T-cell (primary cell): ENCODE measurements at regions of chr3 and their contacts with region 1.

Region 1: GRCh38 chr3:46866720-46867549 is 3.7 kb upstream of the MYL3 start:
- DNase-seq: peak; percentile 22 to 87 (median 72)
- ATAC-seq: peak; percentile 64 to 75 (median 69)
- H3K4me3 ChIP-seq: no peak overlapping the region
- H3K4me3 Mint-ChIP-seq: no peak overlapping the region
- H3K27ac ChIP-seq: no peak overlapping the region
- H3K27ac Mint-ChIP-seq: no peak overlapping the region
- H3K4me1 ChIP-seq: no peaks in the 10 kb centered on the region
- H3K4me1 Mint-ChIP-seq: no peaks in the 10 kb centered on the region
- H3K27me3 ChIP-seq: peaks cover 0 to 34% of the 10 kb centered on the region in 2 experiments
- H3K27me3 Mint-ChIP-seq: peaks cover 0 to 10% of the 10 kb centered on the region in 2 donors

Region 2: GRCh38 chr3:47324278-47324865 is 457.4 kb after region 1 on chr3:
- CTCF ChIA-PET with region 1: interaction called in 1 of 2 experiments, 13 read pairs
- POLR2A ChIA-PET with region 1: no interaction called
- DNase-seq: peak in 32 of 35 experiments; percentile 5 to 72 (median 30)
- ATAC-seq: peak; percentile 48 to 67 (median 64)
- H3K4me3 ChIP-seq: no peak overlapping the region
- H3K4me3 Mint-ChIP-seq: no peak overlapping the region
- H3K27ac ChIP-seq: no peak overlapping the region
- H3K27ac Mint-ChIP-seq: no peak overlapping the region
- H3K4me1 ChIP-seq: no peaks in the 10 kb centered on the region
- H3K4me1 Mint-ChIP-seq: peaks cover 2 to 8% (median 2%) of the 10 kb centered on the region in 3 donors
- H3K27me3 ChIP-seq: no peaks in the 10 kb centered on the region
- H3K27me3 Mint-ChIP-seq: no peaks in the 10 kb centered on the region